Ovary (tissue), 10 donors: ENCODE measurements at regions of chr1 and their contacts with region 1.

Region 1: GRCh38 chr1:26431979-26432695 is at the start of gene DHDDS:
- DNase-seq: peak; percentile 98 to 99 (median 99)
- H3K4me3 ChIP-seq: peak within 1 kb of the TSS; percentile 38
- H3K27ac ChIP-seq: peak within 1 kb of the TSS in 1 of 2 donors; percentile 67
- H3K4me1 ChIP-seq: peaks cover 2% of the 10 kb centered on the region
- H3K27me3 ChIP-seq: no peaks in the 10 kb centered on the region
- CTCF ChIP-seq: no peak
- EP300 ChIP-seq: no peak
- POLR2A ChIP-seq: peak; percentile 80
- total RNA-seq, gene DHDDS: 20.0 to 46.2 (median 27.3) TPM

Region 2: DNA sequence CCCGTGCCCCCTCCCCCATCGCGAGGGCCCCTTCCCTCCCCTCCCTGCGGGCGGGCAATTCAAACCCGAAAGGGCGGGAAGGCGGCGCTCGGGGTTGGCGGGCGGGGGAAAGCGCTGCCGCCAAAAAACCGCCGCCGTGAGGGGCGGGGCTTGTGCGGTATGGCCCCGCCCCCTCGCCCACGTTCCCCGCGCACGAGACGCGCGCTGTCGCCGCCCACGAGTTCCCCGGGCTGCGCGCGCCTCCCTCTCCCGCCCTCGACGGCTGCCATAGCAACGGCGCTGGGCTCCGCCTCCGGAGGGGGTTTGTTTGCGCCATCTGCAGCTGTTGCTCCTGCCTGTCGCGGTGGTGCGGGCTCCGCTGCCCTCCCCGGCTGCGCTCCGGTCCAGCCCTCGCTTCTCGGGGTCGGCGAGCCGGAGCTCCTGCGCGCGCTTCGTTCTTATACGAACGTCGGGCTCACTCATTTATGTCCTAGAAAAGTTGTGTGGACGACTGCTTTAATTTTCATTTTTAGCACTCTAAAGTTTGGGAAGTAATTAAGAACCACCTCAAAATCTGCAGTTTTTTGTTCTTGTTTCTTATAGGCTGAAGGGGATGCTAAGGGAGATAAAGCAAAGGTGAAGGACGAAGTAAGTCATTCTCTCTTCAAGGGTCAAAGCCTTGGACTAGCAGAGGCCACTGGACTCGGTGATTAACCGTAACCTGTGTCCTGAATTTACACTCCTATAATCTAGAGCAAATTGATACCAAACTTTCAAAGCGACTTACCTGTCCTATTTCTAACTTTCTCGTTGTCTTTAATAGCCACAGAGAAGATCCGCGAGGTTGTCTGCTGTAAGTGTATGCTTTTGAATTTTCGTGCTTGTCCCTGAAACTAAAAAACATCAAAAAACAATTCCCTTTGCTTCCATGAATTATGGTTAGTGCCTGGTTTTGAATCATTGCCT is 41.0 kb after region 1 on chr1:
- intact Hi-C with region 1: loop called in 1 of 4 experiments (anchors 5 kb)
- DNase-seq: peak; percentile 97 to 98 (median 98)
- H3K4me3 ChIP-seq: peak overlapping the region; percentile 99
- H3K27ac ChIP-seq: peak overlapping the region; percentile 97 to 100
- H3K4me1 ChIP-seq: peaks cover 8% of the 10 kb centered on the region
- H3K27me3 ChIP-seq: no peaks in the 10 kb centered on the region
- CTCF ChIP-seq: no peak
- EP300 ChIP-seq: no peak
- POLR2A ChIP-seq: peak; percentile 54